CD4-positive, alpha-beta memory T cell (primary cell): ENCODE measurements at regions of chr7 and their contacts with region 1.

Region 1: DNA sequence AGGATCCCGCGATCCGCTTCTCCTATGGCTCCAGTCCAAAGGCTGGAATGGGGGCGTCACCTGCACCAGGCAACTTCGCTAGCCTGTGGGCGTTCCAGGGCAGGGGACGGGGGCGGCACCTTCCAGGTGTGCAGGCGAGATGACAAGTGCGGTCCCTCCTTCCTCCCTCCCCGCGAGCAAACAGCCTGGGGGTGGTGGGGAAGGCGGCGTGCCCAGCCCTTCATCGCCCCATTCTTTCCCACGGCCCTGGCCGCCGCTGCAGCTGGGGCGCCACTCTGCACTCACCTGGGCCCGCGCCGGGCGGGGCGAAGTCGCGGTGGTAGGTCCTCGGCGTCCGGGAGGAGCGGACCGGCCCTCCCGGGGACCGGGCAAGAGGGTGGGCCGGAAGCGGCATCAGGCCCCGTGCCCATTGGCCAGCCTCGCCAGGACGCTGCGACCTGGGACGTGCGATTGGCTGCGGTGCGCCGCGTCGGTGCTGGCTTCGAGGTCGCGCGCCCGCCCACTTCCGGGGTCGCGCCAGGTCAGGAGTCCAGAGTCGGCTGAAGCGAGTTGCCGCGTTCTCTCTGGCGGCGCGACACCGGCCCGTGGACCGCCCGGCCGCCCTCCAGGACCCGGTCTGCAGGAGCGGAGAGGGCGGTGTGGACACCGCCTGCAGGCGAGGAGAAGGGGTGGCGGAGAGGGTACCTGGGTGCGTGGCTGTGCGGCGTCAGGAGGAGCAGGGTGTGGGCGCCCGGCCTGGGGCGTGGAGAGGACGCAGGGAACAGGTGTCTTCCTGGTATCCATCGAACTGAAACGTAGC is at the start of gene TECPR1:
- DNase-seq: peak; percentile 85 to 91 (median 89)
- H3K4me3 ChIP-seq: peak within 1 kb of the TSS; percentile 83 to 99
- H3K4me3 Mint-ChIP-seq: peak within 1 kb of the TSS; percentile 92 to 97 (median 94)
- H3K27ac ChIP-seq: peak within 1 kb of the TSS; percentile 82
- H3K27ac Mint-ChIP-seq: peak within 1 kb of the TSS; percentile 98 to 100 (median 99)
- H3K4me1 ChIP-seq: peaks cover 71% of the 10 kb centered on the region
- H3K4me1 Mint-ChIP-seq: peaks cover 28 to 80% (median 56%) of the 10 kb centered on the region in 4 donors
- H3K27me3 ChIP-seq: no peaks in the 10 kb centered on the region
- H3K27me3 Mint-ChIP-seq: no peaks in the 10 kb centered on the region
- total RNA-seq, gene TECPR1: 140 to 147 TPM

Region 2: GRCh38 chr7:98168181-98168905 is 83.7 kb before region 1 on chr7:
- CTCF ChIA-PET with region 1: interaction called, 10 read pairs
- POLR2A ChIA-PET with region 1: no interaction called
- intact Hi-C with region 1: no loop called
- DNase-seq: peak; percentile 48 to 72 (median 54)
- H3K4me3 ChIP-seq: no peak overlapping the region
- H3K4me3 Mint-ChIP-seq: no peak overlapping the region
- H3K27ac ChIP-seq: no peak overlapping the region
- H3K27ac Mint-ChIP-seq: peak overlapping the region in 1 of 7 donors; percentile 57
- H3K4me1 ChIP-seq: no peaks in the 10 kb centered on the region
- H3K4me1 Mint-ChIP-seq: peaks cover 4 to 11% (median 9%) of the 10 kb centered on the region in 4 donors
- H3K27me3 ChIP-seq: no peaks in the 10 kb centered on the region
- H3K27me3 Mint-ChIP-seq: no peaks in the 10 kb centered on the region

Region 3: DNA sequence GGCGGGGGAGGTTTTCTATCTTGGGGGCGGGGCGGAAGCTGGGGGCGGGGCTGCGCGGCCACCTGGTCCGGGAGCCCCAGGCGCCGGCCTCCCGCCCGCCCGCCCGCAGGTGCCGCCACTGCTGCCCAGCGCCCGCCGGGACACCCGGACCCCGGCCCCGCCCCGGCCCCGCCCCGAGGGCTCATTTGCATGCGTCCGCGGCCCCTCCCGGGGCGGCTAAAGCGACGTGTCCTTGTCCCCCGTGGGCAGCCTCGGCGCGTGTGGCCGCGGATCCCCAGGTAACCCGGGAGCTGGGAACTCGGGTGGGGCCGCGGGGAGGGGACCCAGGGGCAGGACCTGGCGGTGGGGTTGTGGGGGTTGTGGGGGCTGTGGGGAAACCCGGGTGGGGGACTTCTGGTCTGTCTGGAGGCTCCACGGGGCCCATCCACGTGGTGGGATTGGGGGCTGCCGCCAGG is 40.8 kb before region 1 on chr7 and contains the start of gene BHLHA15:
- CTCF ChIA-PET with region 1: no interaction called
- POLR2A ChIA-PET with region 1: interaction called, 15 read pairs
- intact Hi-C with region 1: no loop called
- DNase-seq: no peak
- H3K4me3 ChIP-seq: no peak within 1 kb of the TSS
- H3K4me3 Mint-ChIP-seq: peak within 1 kb of the TSS in 7 of 8 donors; percentile 52 to 79 (median 73)
- H3K27ac ChIP-seq: no peak within 1 kb of the TSS
- H3K27ac Mint-ChIP-seq: peak within 1 kb of the TSS in 1 of 7 donors; percentile 59
- H3K4me1 ChIP-seq: peaks cover 4% of the 10 kb centered on the region
- H3K4me1 Mint-ChIP-seq: peaks cover 0 to 12% (median 8%) of the 10 kb centered on the region in 4 donors
- H3K27me3 ChIP-seq: no peaks in the 10 kb centered on the region
- H3K27me3 Mint-ChIP-seq: no peaks in the 10 kb centered on the region
- total RNA-seq, gene BHLHA15: not detected

Region 4: GRCh38 chr7:98223898-98224840 is 27.9 kb before region 1 on chr7:
- CTCF ChIA-PET with region 1: no interaction called
- POLR2A ChIA-PET with region 1: no interaction called
- intact Hi-C with region 1: no loop called
- DNase-seq: no peak
- H3K4me3 ChIP-seq: no peak overlapping the region
- H3K4me3 Mint-ChIP-seq: no peak overlapping the region
- H3K27ac ChIP-seq: no peak overlapping the region
- H3K27ac Mint-ChIP-seq: no peak overlapping the region
- H3K4me1 ChIP-seq: no peaks in the 10 kb centered on the region
- H3K4me1 Mint-ChIP-seq: peaks cover 2 to 4% (median 3%) of the 10 kb centered on the region in 4 donors
- H3K27me3 ChIP-seq: no peaks in the 10 kb centered on the region
- H3K27me3 Mint-ChIP-seq: no peaks in the 10 kb centered on the region

Region 5: GRCh38 chr7:98240961-98241674 is 10.9 kb before region 1 on chr7:
- CTCF ChIA-PET with region 1: interaction called, 14 read pairs
- POLR2A ChIA-PET with region 1: interaction called, 17 read pairs
- intact Hi-C with region 1: no loop called
- DNase-seq: peak in 2 of 5 donors; percentile 15
- H3K4me3 ChIP-seq: no peak overlapping the region
- H3K4me3 Mint-ChIP-seq: no peak overlapping the region
- H3K27ac ChIP-seq: no peak overlapping the region
- H3K27ac Mint-ChIP-seq: peak overlapping the region in 1 of 7 donors; percentile 47
- H3K4me1 ChIP-seq: no peaks in the 10 kb centered on the region
- H3K4me1 Mint-ChIP-seq: peaks cover 0 to 12% (median 2%) of the 10 kb centered on the region in 4 donors
- H3K27me3 ChIP-seq: no peaks in the 10 kb centered on the region
- H3K27me3 Mint-ChIP-seq: no peaks in the 10 kb centered on the region

Region 6: DNA sequence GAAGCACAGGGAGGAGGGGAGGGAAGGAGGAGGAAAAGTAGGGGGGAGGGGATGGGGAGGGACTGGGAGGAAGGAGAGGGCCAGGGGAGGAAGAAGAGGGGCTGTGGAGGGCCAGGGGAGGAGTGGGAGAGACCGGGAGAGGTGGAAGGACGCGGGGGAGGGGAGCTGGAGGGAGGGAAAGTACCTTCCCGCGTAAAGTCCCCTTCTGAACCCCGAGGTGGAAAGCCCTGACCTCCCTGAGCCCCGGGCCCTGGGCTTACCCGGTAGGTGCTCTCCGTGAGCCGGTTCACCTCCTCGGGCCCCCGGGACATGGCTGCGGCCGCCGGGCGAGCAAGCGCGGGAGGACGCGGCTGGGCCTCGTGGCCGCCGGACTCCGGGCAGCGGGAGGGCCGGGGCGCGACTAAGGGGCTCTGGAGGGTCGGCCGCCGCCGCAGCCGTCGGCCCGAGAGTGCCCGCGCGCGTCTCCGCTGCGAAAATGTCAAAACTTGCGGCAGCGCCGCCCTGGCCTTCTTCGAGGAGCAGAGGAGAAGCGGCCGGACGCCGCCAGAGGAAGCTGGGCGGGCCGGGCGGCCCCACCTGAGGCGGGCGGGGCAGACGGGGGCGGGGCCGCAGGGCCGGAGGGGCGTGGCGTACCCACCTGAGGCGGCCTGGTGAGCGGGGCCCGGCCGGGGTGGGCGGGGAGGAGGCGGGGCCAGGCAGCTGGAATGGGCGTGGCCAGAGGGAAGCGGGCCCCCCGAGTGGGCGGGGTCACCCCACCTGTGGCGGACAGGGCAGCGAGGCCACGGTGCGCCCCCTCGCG is 148.7 kb after region 1 on chr7 and contains the start of gene BAIAP2L1:
- CTCF ChIA-PET with region 1: no interaction called
- POLR2A ChIA-PET with region 1: interaction called, 7 read pairs
- intact Hi-C with region 1: loop called (anchors 5 kb)
- DNase-seq: peak; percentile 57 to 74 (median 73)
- H3K4me3 ChIP-seq: no peak within 1 kb of the TSS
- H3K4me3 Mint-ChIP-seq: peak within 1 kb of the TSS; percentile 58 to 76 (median 66)
- H3K27ac ChIP-seq: no peak within 1 kb of the TSS
- H3K27ac Mint-ChIP-seq: peak within 1 kb of the TSS in 3 of 7 donors; percentile 12 to 48 (median 19)
- H3K4me1 ChIP-seq: peaks cover 12% of the 10 kb centered on the region
- H3K4me1 Mint-ChIP-seq: peaks cover 0 to 9% (median 4%) of the 10 kb centered on the region in 4 donors
- H3K27me3 ChIP-seq: peaks cover 4% of the 10 kb centered on the region
- H3K27me3 Mint-ChIP-seq: peaks cover 7 to 11% of the 10 kb centered on the region in 2 donors
- total RNA-seq, gene BAIAP2L1: 0.36 to 0.38 TPM

Region 7: DNA sequence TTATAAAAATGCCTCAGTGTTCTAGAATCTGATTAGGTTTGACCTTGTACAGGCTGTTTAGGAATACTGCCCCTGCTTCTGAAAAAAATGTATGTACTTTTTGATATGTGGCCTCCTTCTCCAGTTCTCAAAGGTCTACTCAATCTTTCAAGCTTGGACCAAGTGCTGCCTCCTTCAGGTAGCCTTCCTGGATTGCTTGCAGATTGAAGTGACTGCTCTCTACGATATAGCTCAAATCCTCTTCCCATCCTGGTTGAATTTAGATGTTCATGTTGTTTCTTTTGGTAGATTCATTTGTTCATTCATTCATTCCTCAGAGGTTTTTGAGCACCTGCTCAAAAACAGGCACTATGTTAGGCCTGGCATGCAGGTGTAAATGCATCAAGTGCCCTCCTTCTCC is 287.8 kb after region 1 on chr7:
- CTCF ChIA-PET with region 1: no interaction called
- POLR2A ChIA-PET with region 1: no interaction called
- intact Hi-C with region 1: no loop called
- DNase-seq: no peak
- H3K4me3 ChIP-seq: no peak overlapping the region
- H3K4me3 Mint-ChIP-seq: no peak overlapping the region
- H3K27ac ChIP-seq: no peak overlapping the region
- H3K27ac Mint-ChIP-seq: no peak overlapping the region
- H3K4me1 ChIP-seq: no peaks in the 10 kb centered on the region
- H3K4me1 Mint-ChIP-seq: no peaks in the 10 kb centered on the region
- H3K27me3 ChIP-seq: no peaks in the 10 kb centered on the region
- H3K27me3 Mint-ChIP-seq: peaks cover 1 to 3% of the 10 kb centered on the region in 2 donors